ENCODE measurements at regions of chr12 and their contacts with region 1.

Region 1: GRCh38 chr12:121344506-121344905 is 7.7 kb downstream of the ANAPC5 start:
- DNase-seq: no peak
- ATAC-seq: no peak

Region 2: DNA sequence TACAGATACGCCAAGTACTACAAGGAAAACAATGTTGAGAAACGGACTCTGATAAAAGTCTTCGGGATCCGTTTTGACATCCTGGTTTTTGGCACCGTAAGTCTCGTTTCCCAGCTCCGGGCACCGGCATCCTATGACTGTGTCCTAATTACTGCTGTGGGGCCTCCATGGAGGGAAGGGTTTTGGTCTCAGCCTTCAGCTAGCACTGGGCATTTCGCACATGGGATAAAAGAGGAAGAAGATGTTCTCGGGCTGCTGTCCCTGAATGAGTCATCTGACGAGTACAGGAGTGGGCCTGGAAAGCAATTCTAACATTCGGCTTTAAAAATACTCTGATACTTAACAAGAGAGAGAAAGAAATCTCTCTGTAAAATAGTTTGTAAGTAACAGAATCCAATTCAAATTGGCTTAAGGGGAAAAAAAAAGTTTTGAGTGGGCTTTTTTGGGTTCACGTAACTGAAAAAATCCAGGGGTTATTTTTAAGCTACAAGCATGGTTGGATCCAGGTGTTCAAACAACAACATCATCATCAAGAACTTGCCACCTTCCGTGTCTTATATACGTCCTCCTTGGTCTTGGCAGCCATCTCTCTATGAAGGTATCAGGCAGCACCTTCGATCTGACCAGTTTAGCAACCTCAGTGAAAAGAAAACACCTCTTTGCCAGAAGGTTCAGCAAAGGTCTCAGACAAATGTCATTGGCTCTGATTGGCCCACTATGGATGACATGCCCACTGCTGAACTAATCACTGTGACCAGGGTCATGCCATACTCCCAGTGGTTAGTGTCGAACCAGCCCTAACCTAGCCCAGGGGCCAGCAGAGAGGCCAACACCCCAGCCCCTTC is 168.9 kb before region 1 on chr12:
- intact Hi-C with region 1: loop called in 1 of 2 experiments (anchors 5 kb)
- DNase-seq: no peak
- ATAC-seq: peak; percentile 53 to 80

Region 3: GRCh38 chr12:121536899-121537813 is 192.7 kb after region 1 on chr12:
- intact Hi-C with region 1: no loop called
- DNase-seq: peak; percentile 90
- ATAC-seq: peak; percentile 86 to 88

Region 4: GRCh38 chr12:121668750-121669520 is 324.4 kb after region 1 on chr12:
- intact Hi-C with region 1: no loop called
- DNase-seq: peak; percentile 46
- ATAC-seq: no peak